ENCODE measurements at regions of chr2 and their contacts with region 1.

Region 1: DNA sequence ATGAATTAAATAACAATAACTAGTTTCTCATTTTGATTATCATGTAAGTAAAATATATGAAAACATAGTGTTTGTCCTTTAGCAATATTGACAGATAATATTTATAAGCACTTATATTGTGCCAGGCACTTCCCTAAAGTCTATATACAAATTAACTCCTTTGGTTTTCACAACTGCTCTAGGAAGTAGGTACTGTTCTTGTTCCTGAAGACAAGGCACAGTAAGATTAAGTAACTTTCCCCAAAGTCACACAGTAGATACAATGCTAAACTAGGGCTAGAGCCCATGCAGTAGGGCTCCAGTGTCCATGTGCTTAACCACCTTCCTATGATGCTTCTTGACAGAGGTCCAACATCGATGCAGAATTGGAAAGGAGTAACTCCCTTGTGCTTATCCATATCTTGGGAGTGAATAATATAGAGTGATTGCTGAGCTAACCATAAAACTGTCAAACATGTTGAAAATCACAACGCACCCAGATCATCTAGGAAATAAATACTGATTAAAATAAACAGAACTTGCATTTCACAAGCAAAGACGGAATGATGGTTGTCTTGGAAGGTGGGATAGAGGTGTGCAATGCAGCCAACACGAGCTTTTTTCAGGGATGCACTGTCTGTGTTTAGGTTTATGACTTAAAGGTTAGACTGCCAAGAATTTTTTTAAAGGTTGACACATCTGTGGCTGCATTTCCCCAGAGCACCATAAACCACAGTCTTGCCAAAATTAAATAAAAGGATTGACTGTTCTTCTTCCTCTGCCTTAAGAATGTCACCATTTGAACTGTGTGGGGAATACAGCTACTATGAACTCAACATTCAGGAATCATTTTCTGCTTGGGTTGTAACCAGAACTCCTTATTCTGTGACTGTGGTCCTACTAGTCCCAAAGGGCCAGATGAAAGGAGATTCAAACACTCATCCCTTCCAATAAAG is 80.8 kb downstream of the ANKRD44 start:
- DNase-seq: no peak
- ATAC-seq: no peak
- H3K4me3 ChIP-seq: no peak overlapping the region
- H3K4me3 Mint-ChIP-seq: peak overlapping the region; percentile 4
- H3K27ac ChIP-seq: peak overlapping the region in 1 of 2 experiments; percentile 22
- H3K27ac Mint-ChIP-seq: peak overlapping the region; percentile 89
- H3K4me1 ChIP-seq: peaks cover 88% of the 10 kb centered on the region
- H3K4me1 Mint-ChIP-seq: peaks cover 95% of the 10 kb centered on the region
- H3K27me3 ChIP-seq: no peaks in the 10 kb centered on the region
- H3K27me3 Mint-ChIP-seq: no peaks in the 10 kb centered on the region
- CTCF ChIP-seq: no peak

Region 2: DNA sequence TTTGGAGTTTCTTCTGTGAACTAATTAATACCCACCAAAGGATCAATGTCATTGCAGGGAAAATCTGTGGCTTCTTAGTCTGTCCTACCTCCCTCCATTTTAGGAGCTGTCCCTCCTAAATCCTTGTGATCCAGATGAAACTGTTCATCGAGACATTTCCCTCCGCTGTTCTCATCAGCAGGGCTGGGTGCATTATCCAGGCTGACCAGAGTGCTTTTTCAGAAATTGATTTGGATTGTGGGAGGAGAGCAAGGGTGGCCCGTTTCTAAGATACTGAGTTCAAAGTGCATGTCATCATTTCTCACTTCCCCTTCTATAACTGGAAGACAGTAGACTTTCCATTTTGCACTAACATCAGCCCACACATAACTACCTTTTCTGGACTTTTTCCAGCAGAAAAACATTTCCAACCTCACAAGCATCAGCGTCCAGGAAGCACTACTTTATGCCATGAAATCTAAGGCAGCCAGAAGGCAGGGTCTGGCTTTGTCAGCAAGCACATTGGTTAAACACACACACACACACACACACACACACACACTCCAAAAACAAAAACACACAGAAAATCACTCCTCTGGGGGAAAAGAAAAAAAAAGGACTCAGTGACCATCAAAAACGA is 13.3 kb before region 1 on chr2:
- CTCF ChIA-PET with region 1: interaction called, 7 read pairs
- POLR2A ChIA-PET with region 1: interaction called, 6 read pairs
- intact Hi-C with region 1: loop called (anchors 1 to 2 kb)
- DNase-seq: peak in 1 of 9 experiments; percentile 44
- ATAC-seq: peak; percentile 12
- H3K4me3 ChIP-seq: no peak overlapping the region
- H3K4me3 Mint-ChIP-seq: peak overlapping the region; percentile 23
- H3K27ac ChIP-seq: peak overlapping the region in 1 of 2 experiments; percentile 38
- H3K27ac Mint-ChIP-seq: peak overlapping the region; percentile 100
- H3K4me1 ChIP-seq: peaks cover 79% of the 10 kb centered on the region
- H3K4me1 Mint-ChIP-seq: peaks cover 86% of the 10 kb centered on the region
- H3K27me3 ChIP-seq: no peaks in the 10 kb centered on the region
- H3K27me3 Mint-ChIP-seq: no peaks in the 10 kb centered on the region
- CTCF ChIP-seq: no peak